ENCODE measurements at regions of chr20 and their contacts with region 1.

Region 1: DNA sequence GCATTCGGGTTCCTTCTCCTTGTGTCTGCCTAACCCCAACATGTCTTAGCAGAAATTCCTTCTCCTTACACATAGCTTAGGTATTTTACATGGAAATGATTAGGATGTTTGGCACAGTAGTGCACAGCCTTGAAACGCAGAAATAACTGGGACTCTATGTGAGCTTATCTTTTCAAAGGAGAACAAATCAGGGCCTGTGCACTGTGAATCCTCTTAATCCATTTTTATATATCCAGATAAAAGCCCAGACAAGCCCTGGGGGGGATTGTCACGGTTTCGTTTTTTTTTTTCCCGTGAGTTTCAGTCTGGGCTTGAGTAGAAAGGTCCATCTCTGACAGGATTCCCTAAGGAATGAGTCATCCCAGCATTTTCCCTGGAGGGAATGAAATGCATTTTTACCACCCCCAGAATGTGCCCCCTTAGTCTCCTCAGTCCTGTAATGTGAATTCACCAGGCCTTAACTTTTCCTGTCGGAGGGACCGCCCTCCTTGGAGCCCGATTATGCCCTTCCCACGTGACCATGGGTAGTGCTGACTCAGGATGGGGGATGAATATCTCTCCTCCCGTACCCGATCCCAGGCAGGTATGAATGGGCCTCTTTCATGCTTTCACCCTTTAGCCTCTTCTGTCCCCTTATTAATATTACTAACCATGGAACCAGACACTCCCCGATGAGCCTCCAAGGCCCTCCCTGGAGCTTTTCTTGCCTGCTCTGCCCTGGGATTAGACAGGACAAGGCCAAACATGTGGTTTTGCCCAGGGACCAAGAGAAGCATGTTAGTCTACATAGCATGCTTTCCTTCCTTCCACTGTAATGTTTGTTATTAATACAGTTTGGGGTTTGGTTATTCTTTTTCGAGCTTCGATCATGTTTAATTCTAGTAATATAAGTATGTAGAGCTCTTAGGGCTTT is 23.9 kb upstream of the NAA20 start:
- DNase-seq: peak; percentile 53 to 76 (median 60)
- ATAC-seq: peak; percentile 80
- H3K4me3 ChIP-seq: no peak overlapping the region
- H3K27ac ChIP-seq: peak overlapping the region in 3 of 4 donors; percentile 44 to 73 (median 71)
- H3K4me1 ChIP-seq: peaks cover 39% of the 10 kb centered on the region
- H3K27me3 ChIP-seq: no peaks in the 10 kb centered on the region
- CTCF ChIP-seq: no peak
- POLR2A ChIP-seq: no peak

Region 2: DNA sequence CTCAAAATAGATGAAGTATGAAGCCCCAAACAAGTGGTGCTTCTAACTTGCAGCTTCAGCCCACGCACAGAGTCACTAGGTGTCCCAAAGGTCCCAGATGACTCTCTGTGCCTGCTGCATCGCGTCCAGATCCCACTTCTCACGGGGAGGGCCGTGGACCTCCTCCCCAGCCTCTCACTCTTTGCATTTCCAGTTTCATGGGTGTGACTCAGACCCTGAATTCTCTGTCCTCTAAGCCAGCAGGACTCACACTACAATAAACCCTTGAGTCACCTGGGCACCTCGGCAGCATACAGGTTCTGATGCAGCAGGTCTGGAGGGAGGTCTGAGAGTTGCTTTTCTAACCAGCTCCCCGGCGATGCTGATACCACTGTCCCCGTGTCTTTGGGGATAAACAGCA is 349.2 kb before region 1 on chr20:
- intact Hi-C with region 1: no loop called
- DNase-seq: no peak
- ATAC-seq: no peak
- H3K4me3 ChIP-seq: no peak overlapping the region
- H3K27ac ChIP-seq: no peak overlapping the region
- H3K4me1 ChIP-seq: no peaks in the 10 kb centered on the region
- H3K27me3 ChIP-seq: no peaks in the 10 kb centered on the region
- CTCF ChIP-seq: no peak
- POLR2A ChIP-seq: no peak

Region 3: GRCh38 chr20:19784511-19785172 is 208.6 kb before region 1 on chr20:
- intact Hi-C with region 1: loop called (anchors 5 kb)
- DNase-seq: peak; percentile 43 to 71 (median 58)
- ATAC-seq: peak; percentile 90
- H3K4me3 ChIP-seq: no peak overlapping the region
- H3K27ac ChIP-seq: peak overlapping the region in 1 of 4 donors; percentile 7
- H3K4me1 ChIP-seq: peaks cover 25% of the 10 kb centered on the region
- H3K27me3 ChIP-seq: no peaks in the 10 kb centered on the region
- CTCF ChIP-seq: peak; percentile 63 to 86 (median 77)
- POLR2A ChIP-seq: no peak

Region 4: DNA sequence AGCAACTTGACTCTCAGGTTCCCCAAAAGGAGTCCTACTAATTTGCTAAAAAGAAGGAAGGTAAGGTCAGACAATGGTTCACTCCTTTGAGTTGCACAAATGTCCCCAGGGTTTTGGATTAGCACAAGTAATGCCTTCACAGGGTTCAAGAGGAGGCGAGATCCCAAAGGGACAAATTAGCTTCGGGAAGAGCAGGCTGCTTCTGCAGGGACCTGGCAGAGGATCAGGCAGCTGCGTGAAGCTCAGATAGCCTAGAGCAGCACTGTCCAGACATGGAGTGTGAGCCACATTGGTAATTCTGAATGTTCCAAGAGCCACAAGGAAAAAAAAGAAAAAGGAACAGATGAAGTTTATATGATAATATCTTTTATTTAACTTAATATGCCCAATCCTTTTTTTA is 174.4 kb after region 1 on chr20:
- intact Hi-C with region 1: no loop called
- DNase-seq: peak in 1 of 4 donors; percentile 7
- ATAC-seq: no peak
- H3K4me3 ChIP-seq: no peak overlapping the region
- H3K27ac ChIP-seq: no peak overlapping the region
- H3K4me1 ChIP-seq: no peaks in the 10 kb centered on the region
- H3K27me3 ChIP-seq: no peaks in the 10 kb centered on the region
- CTCF ChIP-seq: no peak
- POLR2A ChIP-seq: no peak

Region 5: DNA sequence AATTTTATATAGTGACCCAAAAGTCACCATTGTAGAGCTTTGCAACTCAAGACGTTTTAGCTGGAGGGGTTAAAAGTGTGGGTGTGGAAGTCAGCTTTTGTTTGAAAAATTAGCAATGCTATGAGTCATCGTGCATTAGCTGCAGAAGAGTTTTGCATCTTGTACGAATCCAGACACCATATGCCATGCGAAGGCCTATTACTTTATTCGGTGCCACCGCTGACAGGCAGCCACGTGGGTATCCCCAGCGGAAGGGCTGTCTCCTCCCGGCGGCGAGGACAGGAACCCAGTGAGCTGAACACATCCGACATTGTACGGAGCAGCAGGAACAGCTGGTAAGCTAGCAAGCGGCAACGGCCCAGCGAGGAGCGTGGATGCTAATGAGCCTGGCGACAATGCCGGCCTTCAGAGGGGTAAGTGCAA is 459.0 kb after region 1 on chr20:
- intact Hi-C with region 1: no loop called
- DNase-seq: peak in 3 of 4 donors; percentile 44 to 66 (median 53)
- ATAC-seq: peak; percentile 52
- H3K4me3 ChIP-seq: no peak overlapping the region
- H3K27ac ChIP-seq: no peak overlapping the region
- H3K4me1 ChIP-seq: no peaks in the 10 kb centered on the region
- H3K27me3 ChIP-seq: no peaks in the 10 kb centered on the region
- CTCF ChIP-seq: no peak
- POLR2A ChIP-seq: no peak

Measured in body of pancreas (tissue), 4 donors.